ENCODE measurements at regions of chr3 and their contacts with region 1.

Region 1: DNA sequence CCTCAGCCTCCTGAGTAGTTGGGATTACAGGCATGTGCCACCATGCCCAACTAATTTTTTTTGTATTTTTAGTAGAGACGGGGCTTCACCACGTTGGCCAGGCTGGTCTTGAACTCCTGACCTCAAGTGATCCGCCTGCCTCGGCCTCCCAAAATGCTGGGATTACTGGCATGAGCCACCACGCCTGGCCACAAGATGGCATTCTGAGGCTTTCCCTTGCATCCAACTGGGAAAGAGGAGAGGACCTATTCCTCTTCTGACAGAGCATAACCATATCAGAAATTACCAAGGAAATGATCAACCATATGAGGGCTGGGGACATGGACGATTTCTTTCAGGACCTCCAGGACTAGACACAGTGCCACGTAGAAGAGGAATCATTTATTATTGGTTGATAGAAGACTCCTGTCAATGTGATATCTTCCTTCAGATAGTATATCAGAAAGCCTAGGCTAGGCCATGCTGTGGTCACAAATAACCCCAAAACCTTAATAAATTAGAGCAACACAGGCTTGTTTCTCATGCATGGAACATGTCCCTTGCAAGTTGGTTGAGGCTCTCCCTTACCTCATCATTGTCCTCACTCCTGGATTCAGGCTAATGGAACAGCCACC is 372.3 kb upstream of the IL12A start:
- DNase-seq: no peak

Region 2: DNA sequence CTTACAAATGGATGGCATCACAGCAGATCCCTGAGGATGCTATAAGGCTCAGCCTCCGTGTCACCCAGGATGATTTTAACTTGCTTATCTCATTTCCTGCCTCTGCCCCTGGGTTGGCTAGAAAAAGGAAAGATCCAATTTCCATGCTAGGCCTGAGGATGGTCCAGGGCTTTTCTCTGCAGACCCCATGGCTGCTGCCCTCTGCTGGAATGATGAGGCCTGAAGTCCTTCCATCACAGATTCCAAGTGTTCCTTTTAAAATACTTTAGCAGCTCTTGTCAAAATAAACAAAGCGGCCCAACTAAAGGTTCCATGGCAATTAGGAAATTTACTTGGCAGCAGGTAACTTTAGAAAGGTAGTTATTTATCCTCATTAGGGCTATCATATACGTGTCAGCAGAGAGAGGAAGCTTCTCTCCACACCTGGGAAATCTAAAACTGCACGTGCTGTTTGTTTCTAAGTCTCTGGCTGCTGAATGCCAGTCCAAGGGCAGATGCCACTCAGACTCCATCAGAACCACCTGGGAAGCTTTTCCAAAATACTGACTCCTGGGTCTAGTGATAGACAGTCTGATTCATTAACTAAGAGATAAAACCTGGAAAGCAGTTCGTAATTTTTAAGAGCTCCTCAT is 29.6 kb before region 1 on chr3:
- intact Hi-C with region 1: no loop called
- DNase-seq: no peak

Region 3: GRCh38 chr3:159660901-159661300 is 44.6 kb after region 1 on chr3:
- intact Hi-C with region 1: loop called in 1 of 2 experiments (anchors 1 kb)
- DNase-seq: no peak

Region 4: GRCh38 chr3:159732172-159733111 is 116.1 kb after region 1 on chr3:
- intact Hi-C with region 1: loop called in 1 of 2 experiments (anchors 10 kb)
- DNase-seq: no peak

Region 5: GRCh38 chr3:159749406-159749805 is 133.1 kb after region 1 on chr3:
- intact Hi-C with region 1: no loop called
- DNase-seq: no peak

Region 6: DNA sequence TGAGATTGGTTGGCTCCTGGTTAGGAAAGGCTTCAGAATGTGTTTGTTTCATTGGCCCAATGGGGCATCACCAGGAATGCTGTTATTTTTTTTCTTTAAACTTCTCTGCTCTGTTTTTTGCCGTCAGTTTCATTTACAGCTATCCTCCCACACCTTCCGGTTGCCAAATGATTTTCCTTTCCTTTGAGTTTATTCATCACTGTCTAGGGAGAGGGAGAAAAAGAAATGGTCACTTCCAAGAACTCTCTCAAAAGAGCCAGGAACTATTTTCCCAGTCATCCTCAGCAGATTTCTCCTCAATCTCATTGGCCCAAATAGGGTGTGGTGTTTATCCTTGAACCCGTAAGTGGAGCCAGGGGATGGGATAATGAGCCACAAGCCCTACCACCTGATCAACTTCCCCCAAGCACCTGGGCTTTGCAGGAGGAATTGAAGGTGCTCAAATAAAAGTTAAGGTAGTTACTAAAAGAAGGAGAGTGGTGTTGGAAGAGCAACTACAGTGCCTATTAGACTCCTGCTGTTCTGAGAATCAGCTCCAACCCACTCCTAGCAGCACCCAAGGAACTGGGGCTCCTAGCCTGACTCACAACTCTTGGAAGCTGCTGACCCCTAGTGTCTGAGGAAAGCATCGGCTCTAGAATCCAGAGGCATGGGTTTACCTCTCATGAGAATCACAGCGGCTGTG is 188.5 kb after region 1 on chr3:
- intact Hi-C with region 1: loop called (anchors 10 kb)
- DNase-seq: no peak

Region 7: GRCh38 chr3:160012108-160012507 is 395.8 kb after region 1 on chr3:
- intact Hi-C with region 1: loop called in 1 of 2 experiments (anchors 10 kb)
- DNase-seq: no peak

Region 8: DNA sequence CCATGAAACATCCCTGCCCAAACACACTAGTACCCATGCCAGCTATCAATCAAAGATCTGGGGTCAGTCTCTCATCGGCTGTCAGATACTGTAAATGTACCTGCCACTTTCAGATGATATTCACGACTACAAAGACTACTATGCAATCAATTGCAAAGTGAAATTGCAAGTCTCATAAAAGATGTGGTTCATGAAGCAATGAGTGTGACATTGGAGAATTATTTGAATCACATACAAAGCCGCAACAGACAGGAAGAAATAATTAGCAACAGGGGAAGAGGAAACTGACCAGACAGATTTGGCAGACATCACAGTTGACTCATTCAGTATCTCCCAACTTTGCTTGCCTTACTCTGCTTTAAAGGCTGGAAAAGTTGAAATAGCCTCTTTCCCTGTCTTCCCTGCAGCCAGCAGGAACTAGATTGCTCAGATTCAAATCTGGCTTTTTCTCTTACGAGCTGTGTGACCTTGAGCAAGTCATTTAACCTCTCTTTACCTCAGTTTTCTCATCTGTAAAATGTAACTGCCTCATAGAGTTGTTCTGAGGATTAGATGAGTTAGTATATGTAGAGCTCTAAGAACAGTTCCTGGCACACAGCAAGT is 513.2 kb after region 1 on chr3:
- intact Hi-C with region 1: no loop called
- DNase-seq: no peak

Region 9: GRCh38 chr3:161230621-161231171 is 1614.4 kb after region 1 on chr3:
- intact Hi-C with region 1: no loop called
- DNase-seq: no peak

Measured in posterior vena cava (tissue), 2 donors.